ENCODE measurements at regions of chr16 and their contacts with region 1.

Region 1: GRCh38 chr16:29943846-29944669 is 17.8 kb upstream of the TMEM219 start:
- DNase-seq: no peak
- H3K4me3 Mint-ChIP-seq: no peak overlapping the region
- H3K27ac Mint-ChIP-seq: no peak overlapping the region
- H3K4me1 Mint-ChIP-seq: no peaks in the 10 kb centered on the region
- H3K27me3 Mint-ChIP-seq: peaks cover 29% of the 10 kb centered on the region

Region 2: DNA sequence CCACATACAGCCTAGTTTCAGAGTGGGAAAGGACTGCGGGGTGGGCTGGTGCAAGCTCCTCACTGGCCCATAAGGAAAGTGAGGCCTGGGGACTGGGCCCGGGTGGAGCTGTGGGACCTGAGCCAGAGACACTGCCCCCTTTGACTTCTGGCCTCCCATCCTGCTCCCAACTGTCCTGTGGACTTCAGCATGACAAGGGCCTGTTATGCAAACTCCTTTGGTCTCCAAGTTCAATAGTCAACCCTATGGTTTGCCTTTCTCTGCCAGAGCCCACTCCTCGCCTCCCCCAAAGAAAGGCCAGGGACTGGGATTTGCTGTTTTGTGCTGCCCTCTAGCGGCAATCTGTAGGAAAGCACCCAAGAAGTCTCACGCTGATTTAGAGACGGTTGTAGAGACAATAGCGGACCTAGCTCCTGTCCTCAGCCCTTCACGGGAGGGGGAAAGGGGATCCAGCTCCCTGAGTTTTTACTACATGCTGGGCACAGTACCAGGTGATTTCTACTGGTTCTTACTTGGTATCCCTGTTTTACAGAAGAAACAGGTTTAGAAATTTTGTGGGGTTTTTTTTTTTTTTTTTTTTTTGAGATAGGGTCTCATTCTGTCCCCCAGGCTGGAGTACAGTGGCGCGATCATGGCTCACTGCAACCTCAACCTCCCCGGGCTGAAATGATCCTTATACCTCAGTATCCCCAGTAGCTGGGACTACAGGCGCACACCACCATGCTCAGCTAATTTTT is 88.2 kb after region 1 on chr16:
- intact Hi-C with region 1: loop called (anchors 5 kb)
- DNase-seq: peak; percentile 61
- H3K4me3 Mint-ChIP-seq: no peak overlapping the region
- H3K27ac Mint-ChIP-seq: no peak overlapping the region
- H3K4me1 Mint-ChIP-seq: peaks cover 16% of the 10 kb centered on the region
- H3K27me3 Mint-ChIP-seq: peaks cover 48% of the 10 kb centered on the region